IMR-90 (cell line): ENCODE measurements at regions of chr7 and their contacts with region 1.

Region 1: GRCh38 chr7:44348300-44348699 is 22.9 kb upstream of the CAMK2B start:
- DNase-seq: peak; percentile 39
- ATAC-seq: peak; percentile 67
- H3K4me3 ChIP-seq: no peak overlapping the region
- H3K27ac ChIP-seq: no peak overlapping the region
- H3K4me1 ChIP-seq: peaks cover 1% of the 10 kb centered on the region; the same call in 1 of the 2 replicates
- H3K27me3 ChIP-seq: peaks cover 11% of the 10 kb centered on the region
- CTCF ChIP-seq: peak; percentile 63
- POLR2A ChIP-seq: no peak
- RAD21 ChIP-seq: peak; percentile 82

Region 2: GRCh38 chr7:44477063-44477830 is 128.9 kb after region 1 on chr7:
- CTCF ChIA-PET with region 1: no interaction called
- POLR2A ChIA-PET with region 1: no interaction called
- dilution Hi-C with region 1: no loop called
- in situ Hi-C with region 1: no loop called
- intact Hi-C with region 1: loop called (anchors 1 kb)
- DNase-seq: peak; percentile 83
- ATAC-seq: peak; percentile 98
- H3K4me3 ChIP-seq: no peak overlapping the region
- H3K27ac ChIP-seq: no peak overlapping the region
- H3K4me1 ChIP-seq: peaks cover 3% of the 10 kb centered on the region; the same call in 1 of the 2 replicates
- H3K27me3 ChIP-seq: no peaks in the 10 kb centered on the region
- CTCF ChIP-seq: peak; percentile 98
- POLR2A ChIP-seq: 0 out of 2 replicates have a peak, but pooled peaks have one; percentile 44
- RAD21 ChIP-seq: peak; percentile 98

Region 3: DNA sequence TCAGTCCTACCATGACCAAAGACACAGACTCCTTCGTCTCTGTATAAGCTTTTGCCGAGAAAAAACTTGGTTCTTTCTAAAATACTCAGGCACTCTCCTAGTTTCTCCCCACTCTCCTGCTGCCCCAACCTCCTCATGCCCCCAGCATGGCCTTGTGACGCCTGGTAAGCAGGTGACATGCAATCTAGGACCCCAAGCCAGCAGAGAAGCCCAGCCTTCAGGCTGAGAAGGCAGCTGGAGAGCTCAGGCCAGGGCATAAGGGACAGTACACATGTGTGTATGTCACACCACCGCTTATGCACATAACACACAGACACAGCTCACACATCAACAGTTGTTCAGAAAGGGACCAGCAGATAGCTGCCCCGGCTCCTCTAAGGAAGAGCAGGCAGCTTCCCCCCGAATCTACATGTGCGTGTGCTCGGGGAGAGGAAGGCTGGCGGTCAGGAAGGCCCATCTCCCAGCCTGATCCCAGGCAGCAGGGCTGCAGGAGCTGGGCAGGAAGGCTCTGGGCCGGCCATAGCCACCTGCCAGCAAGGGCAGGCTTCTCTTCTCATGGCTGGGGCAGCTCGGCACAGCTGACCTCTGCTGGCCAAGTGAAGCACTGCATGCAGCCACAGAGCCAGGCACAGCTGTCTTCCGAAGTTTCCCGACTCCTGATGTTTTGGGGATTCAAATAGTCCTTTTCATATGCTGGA is 216.9 kb after region 1 on chr7:
- CTCF ChIA-PET with region 1: interaction called, 4 read pairs
- POLR2A ChIA-PET with region 1: no interaction called
- dilution Hi-C with region 1: no loop called
- in situ Hi-C with region 1: no loop called
- intact Hi-C with region 1: loop called (anchors 1 kb)
- DNase-seq: peak; percentile 49
- ATAC-seq: peak; percentile 92
- H3K4me3 ChIP-seq: no peak overlapping the region
- H3K27ac ChIP-seq: no peak overlapping the region
- H3K4me1 ChIP-seq: peaks cover 2% of the 10 kb centered on the region; the same call in 1 of the 2 replicates
- H3K27me3 ChIP-seq: no peaks in the 10 kb centered on the region
- CTCF ChIP-seq: peak; percentile 90
- POLR2A ChIP-seq: peak; percentile 39; the same call in 1 of the 2 replicates
- RAD21 ChIP-seq: peak; percentile 87